Caco-2 (cell line): ENCODE measurements at regions of chr7 and their contacts with region 1.

Region 1: GRCh38 chr7:111561885-111562732 is at the start of gene IMMP2L:
- DNase-seq: peak; percentile 84 to 94
- H3K4me3 ChIP-seq: peak within 1 kb of the TSS; percentile 85
- H3K4me3 Mint-ChIP-seq: peak within 1 kb of the TSS; percentile 92
- H3K27ac Mint-ChIP-seq: peak within 1 kb of the TSS; percentile 89
- H3K4me1 ChIP-seq: peaks cover 15% of the 10 kb centered on the region
- H3K4me1 Mint-ChIP-seq: peaks cover 6% of the 10 kb centered on the region
- H3K27me3 ChIP-seq: no peaks in the 10 kb centered on the region
- H3K27me3 Mint-ChIP-seq: no peaks in the 10 kb centered on the region
- CTCF ChIP-seq: peak in 1 of 2 experiments; percentile 73
- total RNA-seq, gene IMMP2L: 9.5 and 14.8 TPM in 2 replicates

Region 2: DNA sequence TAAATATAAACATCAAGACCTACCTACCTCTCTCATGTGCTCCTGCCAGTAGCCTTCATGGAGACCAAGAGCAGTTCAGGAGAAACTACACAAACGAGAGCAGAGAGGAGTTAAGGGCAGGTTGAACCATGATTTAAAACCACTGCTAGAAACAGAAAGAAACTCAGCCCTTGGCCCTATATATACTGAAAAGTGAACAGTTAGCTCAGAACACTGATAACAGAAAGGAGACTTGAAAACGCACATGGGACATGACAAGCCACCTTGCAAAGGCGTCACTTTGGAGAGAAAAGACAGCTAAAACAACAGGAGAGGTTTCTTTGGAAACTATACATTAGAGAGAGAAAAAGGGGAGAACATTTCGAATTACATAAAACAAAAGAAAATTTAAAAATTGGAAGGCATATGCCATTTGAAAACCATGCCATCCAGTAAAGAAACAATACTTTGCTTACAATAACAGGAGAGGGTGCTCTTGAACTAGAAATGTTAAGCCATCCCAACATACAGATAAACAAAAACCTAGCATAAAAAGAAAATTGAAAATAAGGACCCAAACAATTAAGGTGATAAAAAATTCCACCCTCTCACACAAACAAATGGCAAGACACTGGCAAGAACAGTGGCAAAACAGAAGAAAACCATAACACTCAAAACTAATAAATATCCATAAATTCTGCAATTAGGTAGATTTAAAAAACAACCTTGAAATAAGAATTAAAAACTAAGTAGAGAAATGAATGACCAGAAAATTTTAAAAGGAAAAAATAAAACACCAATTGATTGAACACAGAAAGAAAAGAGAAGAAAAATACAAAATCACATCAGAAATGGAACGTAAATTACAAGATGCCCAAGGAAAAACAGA is 232.5 kb before region 1 on chr7:
- CTCF ChIA-PET with region 1: no interaction called
- POLR2A ChIA-PET with region 1: no interaction called
- intact Hi-C with region 1: loop called (anchors 5 kb)
- DNase-seq: no peak
- H3K4me3 ChIP-seq: no peak overlapping the region
- H3K4me3 Mint-ChIP-seq: no peak overlapping the region
- H3K27ac Mint-ChIP-seq: no peak overlapping the region
- H3K4me1 ChIP-seq: no peaks in the 10 kb centered on the region
- H3K4me1 Mint-ChIP-seq: no peaks in the 10 kb centered on the region
- H3K27me3 ChIP-seq: no peaks in the 10 kb centered on the region
- H3K27me3 Mint-ChIP-seq: peaks cover 2% of the 10 kb centered on the region
- CTCF ChIP-seq: no peak

Region 3: DNA sequence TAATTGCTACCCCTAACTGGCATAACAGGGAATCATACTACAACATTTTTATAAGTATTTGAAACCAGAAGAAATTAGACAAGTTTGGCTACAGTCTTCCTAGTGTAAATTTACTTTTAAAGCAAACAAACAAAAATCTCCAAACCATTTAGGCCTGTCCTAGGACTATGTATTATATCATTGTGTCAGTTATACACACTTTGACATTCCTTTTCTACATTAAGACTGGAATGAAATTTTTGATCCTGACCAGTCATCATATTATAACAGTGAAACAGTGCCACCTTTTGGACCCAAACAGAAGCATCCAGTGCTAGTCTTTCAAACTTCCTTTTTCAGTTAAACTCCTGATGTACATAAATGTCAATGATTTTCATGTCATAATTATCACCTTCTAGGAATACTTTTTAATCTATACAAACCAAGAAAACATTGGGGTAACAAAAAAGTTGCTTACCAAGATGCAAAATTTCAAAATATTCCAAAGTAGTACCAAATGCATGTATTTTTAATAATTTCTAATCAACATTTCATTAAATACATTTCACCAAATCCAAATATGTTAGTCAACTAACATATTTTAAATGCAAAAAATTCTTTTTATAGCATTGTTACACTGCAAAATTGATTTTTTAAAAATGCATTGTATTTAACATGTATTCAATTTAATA is 75.5 kb before region 1 on chr7:
- CTCF ChIA-PET with region 1: no interaction called
- POLR2A ChIA-PET with region 1: no interaction called
- intact Hi-C with region 1: loop called (anchors 2 kb)
- DNase-seq: peak in 1 of 2 experiments; percentile 43
- H3K4me3 ChIP-seq: no peak overlapping the region
- H3K4me3 Mint-ChIP-seq: no peak overlapping the region
- H3K27ac Mint-ChIP-seq: no peak overlapping the region
- H3K4me1 ChIP-seq: no peaks in the 10 kb centered on the region
- H3K4me1 Mint-ChIP-seq: no peaks in the 10 kb centered on the region
- H3K27me3 ChIP-seq: no peaks in the 10 kb centered on the region
- H3K27me3 Mint-ChIP-seq: no peaks in the 10 kb centered on the region
- CTCF ChIP-seq: peak; percentile 61 to 66

Region 4: GRCh38 chr7:111517549-111517951 is 44.6 kb before region 1 on chr7:
- CTCF ChIA-PET with region 1: no interaction called
- POLR2A ChIA-PET with region 1: no interaction called
- intact Hi-C with region 1: no loop called
- DNase-seq: no peak
- H3K4me3 ChIP-seq: no peak overlapping the region
- H3K4me3 Mint-ChIP-seq: no peak overlapping the region
- H3K27ac Mint-ChIP-seq: no peak overlapping the region
- H3K4me1 ChIP-seq: no peaks in the 10 kb centered on the region
- H3K4me1 Mint-ChIP-seq: no peaks in the 10 kb centered on the region
- H3K27me3 ChIP-seq: no peaks in the 10 kb centered on the region
- H3K27me3 Mint-ChIP-seq: no peaks in the 10 kb centered on the region
- CTCF ChIP-seq: no peak

Region 5: DNA sequence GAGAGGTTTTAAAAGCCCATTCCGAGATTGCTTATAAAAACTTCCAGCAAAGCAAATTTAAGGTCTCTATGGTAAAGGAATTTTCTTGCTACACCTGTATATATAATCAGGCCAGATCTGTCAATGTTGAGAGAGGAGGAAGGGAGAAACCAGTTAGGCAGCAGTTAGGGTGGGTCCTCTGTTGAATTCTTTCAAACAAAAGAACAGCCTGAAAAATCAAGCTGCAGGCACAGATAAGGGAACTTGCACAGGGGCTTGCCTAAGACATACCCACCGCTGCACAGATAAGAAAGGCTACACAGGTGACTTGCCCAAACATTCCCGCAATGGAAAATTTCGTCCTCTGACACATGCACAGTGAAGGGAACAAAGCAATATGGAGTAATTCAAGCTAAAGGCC is 60.0 kb after region 1 on chr7:
- CTCF ChIA-PET with region 1: no interaction called
- POLR2A ChIA-PET with region 1: no interaction called
- intact Hi-C with region 1: no loop called
- DNase-seq: peak in 1 of 2 experiments; percentile 43
- H3K4me3 ChIP-seq: no peak overlapping the region
- H3K4me3 Mint-ChIP-seq: no peak overlapping the region
- H3K27ac Mint-ChIP-seq: no peak overlapping the region
- H3K4me1 ChIP-seq: 0 out of 2 replicates have a peak, but pooled peaks cover 4% of the 10 kb centered on the region
- H3K4me1 Mint-ChIP-seq: no peaks in the 10 kb centered on the region
- H3K27me3 ChIP-seq: no peaks in the 10 kb centered on the region
- H3K27me3 Mint-ChIP-seq: no peaks in the 10 kb centered on the region
- CTCF ChIP-seq: no peak

Region 6: GRCh38 chr7:111730476-111731300 is 168.6 kb after region 1 on chr7:
- CTCF ChIA-PET with region 1: no interaction called
- POLR2A ChIA-PET with region 1: no interaction called
- intact Hi-C with region 1: loop called (anchors 1 kb)
- DNase-seq: peak in 1 of 2 experiments; percentile 26
- H3K4me3 ChIP-seq: no peak overlapping the region
- H3K4me3 Mint-ChIP-seq: no peak overlapping the region
- H3K27ac Mint-ChIP-seq: no peak overlapping the region
- H3K4me1 ChIP-seq: no peaks in the 10 kb centered on the region
- H3K4me1 Mint-ChIP-seq: no peaks in the 10 kb centered on the region
- H3K27me3 ChIP-seq: no peaks in the 10 kb centered on the region
- H3K27me3 Mint-ChIP-seq: no peaks in the 10 kb centered on the region
- CTCF ChIP-seq: peak; percentile 17 to 47